Mammary epithelial cell (primary cell): ENCODE measurements at regions of chr13 and their contacts with region 1.

Region 1: GRCh38 chr13:36999054-36999714 is at the start of gene ALG5:
- DNase-seq: peak; percentile 83
- H3K4me3 ChIP-seq: peak within 1 kb of the TSS; percentile 76 to 93 (median 90)
- H3K27ac ChIP-seq: peak within 1 kb of the TSS; percentile 97
- H3K4me1 ChIP-seq: peaks cover 7% of the 10 kb centered on the region
- H3K27me3 ChIP-seq: no peaks in the 10 kb centered on the region
- CTCF ChIP-seq: peak; percentile 70 to 82
- total RNA-seq, gene ALG5: 27.7 to 37.5 TPM

Region 2: DNA sequence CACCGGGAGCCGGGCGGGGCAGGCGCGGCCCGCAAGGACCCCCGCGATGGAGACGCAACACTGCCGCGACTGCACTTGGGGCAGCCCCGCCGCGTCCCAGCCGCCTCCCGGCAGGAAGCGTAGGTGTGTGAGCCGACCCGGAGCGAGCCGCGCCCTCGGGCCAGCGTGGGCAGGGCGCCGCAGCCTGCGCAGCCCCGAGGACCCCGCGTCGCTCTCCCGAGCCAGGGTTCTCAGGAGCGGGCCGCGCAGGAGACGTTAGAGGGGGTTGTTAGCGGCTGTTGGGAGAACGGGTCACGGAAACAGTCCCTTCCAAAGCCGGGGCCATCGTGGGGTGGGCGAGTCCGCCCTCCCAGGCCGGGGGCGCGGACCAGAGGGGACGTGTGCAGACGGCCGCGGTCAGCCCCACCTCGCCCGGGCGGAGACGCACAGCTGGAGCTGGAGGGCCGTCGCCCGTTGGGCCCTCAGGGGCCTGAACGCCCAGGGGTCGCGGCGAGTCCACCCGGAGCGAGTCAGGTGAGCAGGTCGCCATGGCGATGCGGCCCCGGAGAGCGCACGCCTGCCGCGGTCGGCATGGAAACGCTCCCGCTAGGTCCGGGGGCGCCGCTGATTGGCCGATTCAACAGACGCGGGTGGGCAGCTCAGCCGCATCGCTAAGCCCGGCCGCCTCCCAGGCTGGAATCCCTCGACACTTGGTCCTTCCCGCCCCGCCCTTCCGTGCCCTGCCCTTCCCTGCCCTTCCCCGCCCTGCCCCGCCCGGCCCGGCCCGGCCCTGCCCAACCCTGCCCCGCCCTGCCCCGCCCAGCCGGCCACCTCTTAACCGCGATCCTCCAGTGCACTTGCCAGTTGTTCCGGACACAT is 567.3 kb before region 1 on chr13 and contains the start of gene CCNA1:
- CTCF ChIA-PET with region 1: no interaction called
- dilution Hi-C with region 1: no loop called
- in situ Hi-C with region 1: loop called (anchors 25 kb)
- intact Hi-C with region 1: no loop called
- DNase-seq: peak; percentile 47
- H3K4me3 ChIP-seq: peak within 1 kb of the TSS; percentile 60 to 71 (median 68)
- H3K27ac ChIP-seq: peak within 1 kb of the TSS; percentile 64
- H3K4me1 ChIP-seq: peaks cover 18% of the 10 kb centered on the region
- H3K27me3 ChIP-seq: no peaks in the 10 kb centered on the region
- CTCF ChIP-seq: no peak
- total RNA-seq, gene CCNA1: 15.9 to 19.3 TPM

Region 3: GRCh38 chr13:36848199-36848982 is 150.8 kb before region 1 on chr13:
- CTCF ChIA-PET with region 1: interaction called, 9 read pairs
- dilution Hi-C with region 1: no loop called
- in situ Hi-C with region 1: loop called in 1 of 2 experiments (anchors 25 kb)
- intact Hi-C with region 1: no loop called
- DNase-seq: no peak
- H3K4me3 ChIP-seq: no peak overlapping the region
- H3K27ac ChIP-seq: no peak overlapping the region
- H3K4me1 ChIP-seq: no peaks in the 10 kb centered on the region
- H3K27me3 ChIP-seq: no peaks in the 10 kb centered on the region
- CTCF ChIP-seq: peak in 1 of 2 donors; percentile 25

Region 4: GRCh38 chr13:37058910-37059847 is 60.0 kb after region 1 on chr13 and contains the start of gene SUPT20H:
- CTCF ChIA-PET with region 1: no interaction called
- dilution Hi-C with region 1: no loop called
- in situ Hi-C with region 1: no loop called
- intact Hi-C with region 1: loop called (anchors 5 kb)
- DNase-seq: peak; percentile 87
- H3K4me3 ChIP-seq: peak within 1 kb of the TSS; percentile 91 to 94 (median 92)
- H3K27ac ChIP-seq: peak within 1 kb of the TSS; percentile 73
- H3K4me1 ChIP-seq: no peaks in the 10 kb centered on the region
- H3K27me3 ChIP-seq: no peaks in the 10 kb centered on the region
- CTCF ChIP-seq: no peak
- total RNA-seq, gene SUPT20H: 56.7 to 68.5 TPM

Region 5: GRCh38 chr13:37068962-37069361 is 69.8 kb after region 1 on chr13:
- CTCF ChIA-PET with region 1: no interaction called
- dilution Hi-C with region 1: no loop called
- in situ Hi-C with region 1: no loop called
- intact Hi-C with region 1: loop called (anchors 2 kb)
- DNase-seq: no peak
- H3K4me3 ChIP-seq: no peak overlapping the region
- H3K27ac ChIP-seq: no peak overlapping the region
- H3K4me1 ChIP-seq: no peaks in the 10 kb centered on the region
- H3K27me3 ChIP-seq: no peaks in the 10 kb centered on the region
- CTCF ChIP-seq: peak; percentile 18 to 31

Region 6: GRCh38 chr13:37127691-37128241 is 128.6 kb after region 1 on chr13:
- CTCF ChIA-PET with region 1: no interaction called
- dilution Hi-C with region 1: no loop called
- in situ Hi-C with region 1: no loop called
- intact Hi-C with region 1: no loop called
- DNase-seq: no peak
- H3K4me3 ChIP-seq: no peak overlapping the region
- H3K27ac ChIP-seq: no peak overlapping the region
- H3K4me1 ChIP-seq: no peaks in the 10 kb centered on the region
- H3K27me3 ChIP-seq: no peaks in the 10 kb centered on the region
- CTCF ChIP-seq: no peak

Region 7: GRCh38 chr13:37348916-37349643 is 349.9 kb after region 1 on chr13:
- CTCF ChIA-PET with region 1: no interaction called
- dilution Hi-C with region 1: no loop called
- in situ Hi-C with region 1: no loop called
- intact Hi-C with region 1: no loop called
- DNase-seq: no peak
- H3K4me3 ChIP-seq: no peak overlapping the region
- H3K27ac ChIP-seq: no peak overlapping the region
- H3K4me1 ChIP-seq: no peaks in the 10 kb centered on the region
- H3K27me3 ChIP-seq: no peaks in the 10 kb centered on the region
- CTCF ChIP-seq: no peak